ENCODE measurements at regions of chr14 and their contacts with region 1.

Region 1: DNA sequence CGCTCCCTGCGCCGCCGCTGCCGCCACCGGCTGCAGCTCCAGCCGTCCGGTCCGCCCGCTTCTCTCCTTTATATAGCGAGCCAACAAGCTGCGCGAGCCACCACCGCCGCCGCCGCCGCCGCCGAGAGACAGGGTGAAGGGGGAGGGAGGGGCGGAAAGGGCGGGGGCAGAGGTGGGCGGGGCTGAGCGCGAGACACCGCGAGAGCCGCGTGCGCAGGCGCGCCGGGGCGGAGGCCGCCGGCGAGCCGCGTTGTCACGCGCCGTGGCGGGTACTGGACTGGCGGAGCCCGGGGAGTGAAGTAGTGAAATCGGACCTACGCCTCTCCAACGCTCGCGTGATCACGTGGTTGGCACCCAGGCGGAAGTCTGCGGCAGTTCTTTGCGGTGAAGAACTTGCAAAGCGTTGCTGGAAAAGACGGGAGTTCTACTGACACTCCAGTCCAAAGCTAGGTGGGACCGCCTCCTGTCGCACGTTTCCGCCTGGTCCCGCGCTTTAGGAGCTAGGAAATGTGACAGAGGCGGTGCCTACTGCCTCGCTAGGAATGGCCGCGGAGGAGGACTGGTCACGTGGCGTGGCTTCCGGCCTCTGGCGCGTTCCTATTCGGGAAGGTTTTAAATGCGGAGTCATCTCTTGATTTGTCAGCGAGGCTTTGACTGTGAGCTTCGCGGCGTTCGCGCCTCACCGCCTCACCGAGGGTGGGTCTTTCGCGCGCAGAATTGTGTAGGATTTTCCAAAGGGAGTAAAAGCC is at the start of gene GTF2A1:
- DNase-seq: peak; percentile 96
- ATAC-seq: peak; percentile 88
- H3K4me3 ChIP-seq: peak within 1 kb of the TSS; percentile 76
- H3K27ac ChIP-seq: peak within 1 kb of the TSS; percentile 99
- H3K4me1 ChIP-seq: no peaks in the 10 kb centered on the region; the same call in 1 of the 2 replicates
- H3K27me3 ChIP-seq: no peaks in the 10 kb centered on the region
- CTCF ChIP-seq: no peak
- POLR2A ChIP-seq: peak; percentile 74
- RAD21 ChIP-seq: no peak
- total RNA-seq, gene GTF2A1: 41.9 and 60.4 TPM in 2 replicates

Region 2: GRCh38 chr14:81170104-81170828 is 50.7 kb before region 1 on chr14:
- CTCF ChIA-PET with region 1: no interaction called
- POLR2A ChIA-PET with region 1: interaction called, 12 read pairs
- dilution Hi-C with region 1: no loop called
- in situ Hi-C with region 1: no loop called
- intact Hi-C with region 1: loop called (anchors 5 kb)
- DNase-seq: peak; percentile 82
- ATAC-seq: peak; percentile 98
- H3K4me3 ChIP-seq: peak overlapping the region; percentile 47
- H3K27ac ChIP-seq: peak overlapping the region; percentile 73
- H3K4me1 ChIP-seq: peaks cover 9% of the 10 kb centered on the region; the same call in 1 of the 2 replicates
- H3K27me3 ChIP-seq: no peaks in the 10 kb centered on the region
- CTCF ChIP-seq: peak; percentile 88
- POLR2A ChIP-seq: peak; percentile 62
- RAD21 ChIP-seq: peak; percentile 64